Activated naive CD4-positive, alpha-beta T cell treated with anti-CD3 and anti-CD28 coated beads for 36 hours (primary cell): ENCODE measurements at regions of chr7 and their contacts with region 1.

Region 1: GRCh38 chr7:131040467-131040932 is 287.2 kb upstream of the MKLN1 start:
- DNase-seq: peak; percentile 75
- H3K4me3 Mint-ChIP-seq: peak overlapping the region; percentile 61
- H3K27ac Mint-ChIP-seq: peak overlapping the region; percentile 65
- H3K4me1 Mint-ChIP-seq: peaks cover 64% of the 10 kb centered on the region
- H3K27me3 Mint-ChIP-seq: no peaks in the 10 kb centered on the region

Region 2: DNA sequence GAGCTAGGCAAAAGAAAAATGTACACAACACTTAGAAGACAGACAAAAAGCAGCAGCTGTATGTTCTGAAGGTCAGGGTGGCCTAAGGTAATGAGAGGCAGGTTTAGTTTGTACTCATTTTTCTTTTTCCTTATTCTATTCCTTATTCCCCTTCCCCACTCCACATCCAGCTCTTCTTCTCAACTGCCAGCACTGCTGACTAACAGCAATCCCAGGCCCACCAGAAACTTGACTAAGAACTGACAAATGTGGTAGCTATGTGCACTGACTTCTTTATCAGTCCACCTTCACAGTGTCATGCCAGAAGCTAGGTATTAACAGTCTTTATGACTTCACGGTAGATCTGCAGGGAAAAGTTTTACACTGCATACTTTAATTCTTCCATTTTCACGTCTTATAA is 378.1 kb before region 1 on chr7:
- CTCF ChIA-PET with region 1: no interaction called
- intact Hi-C with region 1: no loop called
- DNase-seq: no peak
- H3K4me3 Mint-ChIP-seq: no peak overlapping the region
- H3K27ac Mint-ChIP-seq: no peak overlapping the region
- H3K4me1 Mint-ChIP-seq: no peaks in the 10 kb centered on the region
- H3K27me3 Mint-ChIP-seq: no peaks in the 10 kb centered on the region

Region 3: DNA sequence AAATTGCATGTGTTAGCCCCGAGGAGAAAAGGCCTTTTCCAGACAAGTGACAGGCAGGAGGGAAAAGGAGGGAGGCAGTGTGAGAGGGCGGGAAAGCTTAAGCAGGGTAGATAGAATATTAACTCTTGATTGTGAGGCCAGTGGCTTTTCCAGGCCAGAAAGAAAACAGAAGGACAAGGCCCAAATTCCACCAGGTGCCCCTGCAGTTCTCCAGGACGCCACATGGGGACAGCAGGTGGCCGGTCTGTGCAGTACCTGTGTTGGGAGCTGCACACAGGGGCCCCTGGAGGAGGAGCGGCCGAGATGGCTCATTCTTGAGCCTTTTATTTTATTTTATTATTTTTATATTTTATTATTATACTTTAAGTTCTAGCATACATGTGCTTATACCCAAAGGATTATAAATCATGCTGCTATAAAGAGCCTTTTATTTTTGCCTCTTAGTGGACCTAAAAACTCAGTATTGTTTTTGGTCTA is 165.2 kb before region 1 on chr7:
- CTCF ChIA-PET with region 1: interaction called, 3 read pairs
- intact Hi-C with region 1: loop called (anchors 1 kb)
- DNase-seq: peak; percentile 67
- H3K4me3 Mint-ChIP-seq: no peak overlapping the region
- H3K27ac Mint-ChIP-seq: peak overlapping the region; percentile 59
- H3K4me1 Mint-ChIP-seq: peaks cover 39% of the 10 kb centered on the region
- H3K27me3 Mint-ChIP-seq: no peaks in the 10 kb centered on the region

Region 4: DNA sequence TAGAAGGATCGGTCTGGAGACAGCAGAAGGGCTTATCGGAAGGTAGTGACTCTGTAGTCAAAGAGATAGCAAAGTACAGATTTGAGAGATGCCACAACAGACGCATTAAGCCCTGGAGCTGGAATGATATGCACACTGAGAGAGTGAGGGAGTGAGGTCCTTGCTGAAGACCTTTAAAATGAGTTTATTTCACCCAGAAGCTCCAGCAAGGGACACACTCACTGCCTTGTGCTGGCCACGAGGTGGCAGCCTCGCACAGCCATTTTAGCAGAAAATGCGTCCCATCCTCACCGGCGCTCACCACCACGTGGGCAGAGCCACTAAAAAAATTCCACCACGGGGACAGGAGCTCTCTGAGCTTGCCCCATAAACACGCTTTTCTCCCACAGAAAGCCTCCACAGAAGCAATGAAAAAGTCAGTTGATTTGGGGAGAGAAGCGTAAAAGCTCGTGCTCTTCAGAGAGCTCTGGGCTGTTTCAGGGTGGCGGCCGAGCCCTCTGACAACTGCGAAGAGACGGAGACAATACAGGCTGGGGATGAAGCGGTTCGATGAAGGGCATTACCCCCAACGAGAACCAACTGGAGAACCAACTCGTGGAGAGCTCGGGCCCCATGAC is 143.5 kb before region 1 on chr7:
- CTCF ChIA-PET with region 1: interaction called, 30 read pairs
- intact Hi-C with region 1: loop called (anchors 1 kb)
- DNase-seq: peak; percentile 85
- H3K4me3 Mint-ChIP-seq: no peak overlapping the region
- H3K27ac Mint-ChIP-seq: peak overlapping the region; percentile 85
- H3K4me1 Mint-ChIP-seq: peaks cover 88% of the 10 kb centered on the region
- H3K27me3 Mint-ChIP-seq: no peaks in the 10 kb centered on the region

Region 5: DNA sequence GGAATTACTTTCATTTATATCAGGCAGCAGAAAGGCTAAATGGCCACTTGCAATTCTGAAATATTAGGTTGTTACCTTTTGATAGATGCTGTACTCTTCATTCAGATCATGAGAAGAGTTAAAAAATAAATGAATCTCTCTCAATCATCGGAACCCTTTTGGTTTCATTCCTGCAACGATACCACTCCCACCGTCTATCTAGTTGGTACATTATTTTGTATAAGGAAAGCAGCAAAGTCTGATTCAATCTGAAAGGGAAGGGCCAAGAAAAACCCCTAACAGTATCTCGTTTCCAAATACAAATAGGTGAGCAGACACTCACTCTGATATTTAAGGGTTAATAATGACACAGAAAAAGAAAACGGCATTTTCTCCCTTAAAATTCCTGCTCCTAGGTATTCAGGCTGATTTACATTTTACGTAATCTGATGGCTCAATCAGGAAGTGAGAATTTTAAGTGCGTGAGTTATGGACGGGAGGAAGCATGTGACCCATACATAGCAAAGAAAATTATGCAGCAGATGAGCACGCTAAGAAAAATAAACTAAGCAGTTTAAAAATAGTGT is 97.1 kb before region 1 on chr7:
- CTCF ChIA-PET with region 1: interaction called, 11 read pairs
- intact Hi-C with region 1: no loop called
- DNase-seq: no peak
- H3K4me3 Mint-ChIP-seq: peak overlapping the region; percentile 62
- H3K27ac Mint-ChIP-seq: peak overlapping the region; percentile 90
- H3K4me1 Mint-ChIP-seq: peaks cover 91% of the 10 kb centered on the region
- H3K27me3 Mint-ChIP-seq: no peaks in the 10 kb centered on the region

Region 6: DNA sequence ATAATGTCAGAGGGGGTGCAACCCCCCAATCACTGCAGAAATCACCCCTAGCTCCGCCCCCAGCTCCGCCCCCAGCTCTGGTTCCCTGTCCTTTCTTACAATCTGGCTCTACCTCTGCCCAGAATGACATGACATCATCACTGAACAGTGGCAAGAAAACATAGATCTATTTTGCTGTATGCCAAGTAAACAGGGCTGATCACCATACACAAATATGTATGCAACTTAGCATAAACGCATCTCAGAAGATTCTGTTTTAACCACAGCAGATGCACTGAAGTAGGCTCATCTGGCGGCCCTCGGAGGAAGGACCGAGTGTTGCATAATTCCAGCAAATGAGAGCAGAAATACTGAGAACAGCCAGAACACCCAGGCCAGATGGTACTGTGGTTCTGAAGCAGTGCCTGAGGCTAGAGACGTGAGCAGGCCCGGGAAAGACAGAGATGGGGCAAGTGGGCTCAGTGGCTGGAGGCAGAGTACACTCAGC is 13.2 kb before region 1 on chr7:
- CTCF ChIA-PET with region 1: interaction called, 14 read pairs
- intact Hi-C with region 1: no loop called
- DNase-seq: peak; percentile 52
- H3K4me3 Mint-ChIP-seq: no peak overlapping the region
- H3K27ac Mint-ChIP-seq: peak overlapping the region; percentile 74
- H3K4me1 Mint-ChIP-seq: peaks cover 86% of the 10 kb centered on the region
- H3K27me3 Mint-ChIP-seq: no peaks in the 10 kb centered on the region

Region 7: DNA sequence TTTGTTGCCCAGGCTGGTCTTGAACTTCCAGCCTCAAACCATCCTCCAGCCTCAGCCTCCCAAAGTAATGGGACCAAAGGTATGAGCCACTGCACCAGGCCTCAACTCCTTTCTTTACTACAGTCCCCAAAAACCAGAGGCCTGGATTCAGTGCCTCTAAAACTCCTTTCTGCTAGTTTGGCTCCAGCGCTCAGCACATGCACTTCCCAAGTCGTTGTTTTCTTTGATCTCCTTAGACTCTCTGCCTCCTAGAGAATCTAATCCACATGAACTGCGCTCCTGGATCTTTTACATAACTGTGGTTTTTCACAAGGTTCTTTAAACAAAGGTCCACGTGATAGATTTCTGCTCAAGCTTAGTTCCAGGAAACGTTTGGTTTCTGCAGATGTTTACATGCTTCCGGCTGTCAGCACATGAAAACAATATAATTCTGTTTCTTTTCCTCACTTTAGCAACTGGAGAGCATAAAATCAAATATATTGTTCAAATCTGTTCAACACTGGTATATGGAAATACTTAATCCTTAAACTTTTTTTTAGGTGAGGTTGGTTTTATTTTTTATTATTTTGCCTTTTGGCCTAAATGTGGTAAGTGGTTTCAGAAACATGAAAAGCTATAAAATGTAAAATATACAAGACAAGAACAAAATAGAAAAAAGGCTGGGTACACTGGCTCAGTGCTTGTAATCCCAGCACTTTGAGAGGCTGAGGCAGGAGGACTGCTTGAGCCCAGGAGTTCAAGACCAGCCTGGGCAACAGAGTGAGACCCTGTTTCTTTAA is 16.7 kb after region 1 on chr7:
- CTCF ChIA-PET with region 1: interaction called, 15 read pairs
- intact Hi-C with region 1: no loop called
- DNase-seq: peak; percentile 43
- H3K4me3 Mint-ChIP-seq: peak overlapping the region; percentile 66
- H3K27ac Mint-ChIP-seq: peak overlapping the region; percentile 98
- H3K4me1 Mint-ChIP-seq: peaks cover 65% of the 10 kb centered on the region
- H3K27me3 Mint-ChIP-seq: no peaks in the 10 kb centered on the region